Posterior vena cava (tissue), 2 donors: ENCODE measurements at regions of chr12 and their contacts with region 1.

Region 1: DNA sequence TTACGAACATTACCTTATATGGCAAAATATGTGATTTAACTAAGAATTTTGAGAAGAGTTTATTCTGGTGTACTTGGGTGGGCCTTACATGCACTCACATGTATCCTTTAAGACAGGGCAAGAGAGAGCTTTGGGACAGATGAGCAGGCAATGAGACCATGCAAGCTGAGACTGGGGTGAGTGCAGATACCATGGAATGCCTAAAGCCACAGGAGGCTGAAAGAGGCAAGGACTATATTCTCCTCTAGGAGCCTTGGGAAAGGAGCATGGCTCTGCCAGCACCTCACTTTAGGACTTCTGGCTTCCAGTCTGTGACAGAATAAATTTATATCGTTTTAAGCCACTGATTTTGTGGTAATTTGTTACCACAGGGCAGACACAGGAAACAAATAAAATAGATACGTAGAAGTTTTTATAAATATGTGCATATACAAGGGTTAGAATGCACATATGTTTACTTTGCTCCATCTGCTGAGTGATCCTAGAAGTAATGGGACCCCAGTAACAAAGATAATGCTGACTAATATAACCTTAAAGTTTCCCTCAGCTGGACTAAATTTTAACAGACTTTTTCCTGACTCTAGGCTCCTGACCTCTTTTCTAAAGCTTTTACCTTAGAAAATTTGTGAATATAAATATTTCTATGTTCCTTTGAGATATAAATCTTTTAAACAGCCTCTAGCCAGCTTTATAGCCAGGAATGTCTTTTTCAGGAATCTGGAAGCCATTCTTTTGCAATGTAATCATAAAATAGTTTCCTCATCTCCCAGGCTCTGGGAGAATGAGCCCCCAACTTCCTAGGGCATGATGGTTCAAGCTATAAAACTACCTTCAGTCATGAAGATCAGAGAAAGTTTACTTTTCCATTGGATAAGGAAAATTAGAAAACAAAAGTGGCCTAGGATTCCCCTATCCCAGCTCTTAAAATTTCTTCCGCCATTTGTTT is 216.8 kb downstream of the PPFIA2 start:
- DNase-seq: no peak

Region 2: GRCh38 chr12:81573228-81573627 is 30.9 kb after region 1 on chr12:
- intact Hi-C with region 1: loop called in 1 of 2 experiments (anchors 2 kb)
- DNase-seq: no peak